Dorsolateral prefrontal cortex (tissue), 120 donors: ENCODE measurements at regions of chr4 and their contacts with region 1.

Region 1: DNA sequence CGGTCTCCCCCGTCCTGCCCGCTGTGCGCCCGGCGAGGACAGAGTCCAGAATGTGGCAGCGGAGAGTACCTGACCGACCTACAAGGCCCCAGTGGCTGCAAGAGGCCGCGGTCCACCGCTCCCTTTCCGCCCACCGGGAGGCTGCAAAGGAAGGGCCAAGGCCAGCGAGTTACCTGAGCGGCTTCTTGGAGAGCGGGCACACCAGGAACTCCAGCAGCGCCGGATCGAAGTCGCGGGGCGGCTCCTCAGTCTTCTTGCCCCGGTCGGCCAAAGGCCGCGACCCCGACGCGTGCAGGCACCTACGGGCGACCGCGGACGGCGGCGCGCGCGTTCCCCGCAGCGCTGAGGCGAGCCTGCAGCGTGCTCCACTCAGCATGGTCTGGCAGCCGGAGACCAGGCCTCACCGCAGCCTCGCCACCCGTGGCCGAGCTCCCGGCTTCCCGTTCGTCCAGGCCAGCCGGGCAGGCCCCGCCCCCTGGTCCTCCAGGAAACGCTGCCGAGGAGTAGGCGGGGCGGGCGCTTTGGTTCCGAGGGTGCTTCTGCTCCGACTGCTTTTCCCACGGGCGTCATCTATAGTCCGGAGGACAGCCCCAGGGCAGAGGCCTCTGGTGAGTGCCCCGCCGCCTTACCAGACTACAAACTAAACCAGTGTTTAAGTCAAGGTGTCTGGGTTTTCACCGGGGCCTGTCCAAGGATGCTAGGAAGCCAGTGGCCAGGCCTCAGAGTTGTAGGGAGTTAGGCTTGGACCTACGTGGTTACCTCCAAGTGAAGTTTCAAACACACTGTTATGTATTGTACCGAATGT is at the start of gene PYURF:
- DNase-seq: peak; percentile 88 to 96 (median 94)
- H3K4me3 ChIP-seq: peak within 1 kb of the TSS; percentile 56 to 98 (median 87)
- H3K27ac ChIP-seq: peak within 1 kb of the TSS; percentile 54 to 96 (median 91)
- H3K27me3 ChIP-seq: no peaks in the 10 kb centered on the region
- CTCF ChIP-seq: peak in 35 of 56 donors; percentile 10 to 60 (median 31)
- total RNA-seq, gene PYURF: 31.5 to 63.5 (median 49.8) TPM

Region 2: DNA sequence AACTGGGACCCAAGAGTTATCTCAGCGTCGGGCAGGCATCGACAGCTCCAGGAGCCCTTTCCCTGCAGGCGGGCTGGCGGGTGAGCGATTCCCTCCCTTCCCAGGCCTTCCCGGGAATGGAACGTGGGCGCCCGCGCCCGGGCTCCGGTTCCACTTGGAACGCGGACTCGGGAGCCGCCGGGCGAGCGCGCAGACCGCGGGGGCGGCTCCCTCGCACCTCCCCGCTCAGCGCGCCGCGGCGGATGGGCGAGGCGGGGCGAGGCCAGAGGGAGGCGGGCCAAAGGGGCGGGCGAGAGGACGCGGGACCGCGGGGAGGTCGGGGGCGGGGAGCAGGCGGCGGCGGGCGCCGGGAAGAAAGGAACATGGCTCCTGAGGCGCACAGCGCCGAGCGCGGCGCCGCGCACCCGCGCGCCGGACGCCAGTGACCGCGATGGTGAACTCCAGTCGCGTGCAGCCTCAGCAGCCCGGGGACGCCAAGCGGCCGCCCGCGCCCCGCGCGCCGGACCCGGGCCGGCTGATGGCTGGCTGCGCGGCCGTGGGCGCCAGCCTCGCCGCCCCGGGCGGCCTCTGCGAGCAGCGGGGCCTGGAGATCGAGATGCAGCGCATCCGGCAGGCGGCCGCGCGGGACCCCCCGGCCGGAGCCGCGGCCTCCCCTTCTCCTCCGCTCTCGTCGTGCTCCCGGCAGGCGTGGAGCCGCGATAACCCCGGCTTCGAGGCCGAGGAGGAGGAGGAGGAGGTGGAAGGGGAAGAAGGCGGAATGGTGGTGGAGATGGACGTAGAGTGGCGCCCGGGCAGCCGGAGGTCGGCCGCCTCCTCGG is 516.0 kb before region 1 on chr4 and contains the start of gene PKD2:
- intact Hi-C with region 1: loop called in 1 of 2 experiments (anchors 10 kb)
- DNase-seq: peak; percentile 76 to 93 (median 84)
- H3K4me3 ChIP-seq: peak within 1 kb of the TSS; percentile 64 to 94 (median 84)
- H3K27ac ChIP-seq: peak within 1 kb of the TSS; percentile 64 to 97 (median 91)
- H3K27me3 ChIP-seq: no peaks in the 10 kb centered on the region
- CTCF ChIP-seq: peak in 11 of 56 donors; percentile 9 to 30 (median 16)
- total RNA-seq, gene PKD2: 29.7 to 60.9 (median 40.7) TPM

Region 3: DNA sequence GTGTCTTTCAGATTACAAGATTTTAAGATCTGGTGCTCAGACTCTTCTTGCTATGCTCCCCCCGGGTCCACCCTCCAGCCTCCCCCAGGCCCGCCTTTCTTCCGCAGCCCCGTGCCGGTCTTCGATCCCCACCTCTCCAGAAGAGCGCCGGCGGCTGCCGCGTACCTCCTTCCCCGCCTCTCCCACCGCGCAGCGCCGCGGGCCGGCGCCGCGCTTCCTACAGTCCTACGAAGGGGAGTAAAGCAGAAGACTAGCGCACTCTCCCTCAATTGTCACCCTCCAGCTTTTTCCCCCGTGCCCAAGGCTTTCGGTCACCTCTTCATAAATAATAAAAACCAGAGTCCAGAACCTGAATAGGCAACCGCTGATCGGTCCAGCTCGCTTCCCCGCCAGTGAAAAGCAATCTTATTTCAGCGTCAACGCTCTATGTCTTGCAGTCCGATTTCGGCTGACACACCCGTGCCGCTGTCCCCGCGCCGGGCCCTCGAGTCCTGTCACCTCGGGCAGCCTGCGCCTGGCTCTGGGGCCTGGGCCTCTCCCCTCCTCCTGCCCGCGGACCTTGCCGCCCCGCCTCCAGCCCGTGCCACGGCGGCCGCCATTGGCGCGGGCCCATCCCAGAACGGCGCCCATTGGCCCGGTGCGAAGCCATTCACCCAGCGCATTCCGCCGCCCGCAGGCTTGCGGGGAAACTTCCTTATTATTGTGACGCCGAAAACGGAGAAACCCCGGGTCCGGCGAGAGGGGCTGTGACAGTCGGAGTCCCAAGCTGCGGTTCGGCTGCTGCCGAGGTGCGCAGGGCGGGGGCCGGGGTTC is 68.5 kb after region 1 on chr4 and contains the start of gene HERC3:
- intact Hi-C with region 1: loop called (anchors 2 to 5 kb)
- DNase-seq: peak; percentile 79 to 98 (median 90)
- H3K4me3 ChIP-seq: peak within 1 kb of the TSS; percentile 65 to 98 (median 93)
- H3K27ac ChIP-seq: peak within 1 kb of the TSS; percentile 81 to 99 (median 95)
- H3K27me3 ChIP-seq: no peaks in the 10 kb centered on the region
- CTCF ChIP-seq: peak in 30 of 56 donors; percentile 7 to 38 (median 22)
- total RNA-seq, gene HERC3: 37.3 to 96.2 (median 67.6) TPM

Region 4: DNA sequence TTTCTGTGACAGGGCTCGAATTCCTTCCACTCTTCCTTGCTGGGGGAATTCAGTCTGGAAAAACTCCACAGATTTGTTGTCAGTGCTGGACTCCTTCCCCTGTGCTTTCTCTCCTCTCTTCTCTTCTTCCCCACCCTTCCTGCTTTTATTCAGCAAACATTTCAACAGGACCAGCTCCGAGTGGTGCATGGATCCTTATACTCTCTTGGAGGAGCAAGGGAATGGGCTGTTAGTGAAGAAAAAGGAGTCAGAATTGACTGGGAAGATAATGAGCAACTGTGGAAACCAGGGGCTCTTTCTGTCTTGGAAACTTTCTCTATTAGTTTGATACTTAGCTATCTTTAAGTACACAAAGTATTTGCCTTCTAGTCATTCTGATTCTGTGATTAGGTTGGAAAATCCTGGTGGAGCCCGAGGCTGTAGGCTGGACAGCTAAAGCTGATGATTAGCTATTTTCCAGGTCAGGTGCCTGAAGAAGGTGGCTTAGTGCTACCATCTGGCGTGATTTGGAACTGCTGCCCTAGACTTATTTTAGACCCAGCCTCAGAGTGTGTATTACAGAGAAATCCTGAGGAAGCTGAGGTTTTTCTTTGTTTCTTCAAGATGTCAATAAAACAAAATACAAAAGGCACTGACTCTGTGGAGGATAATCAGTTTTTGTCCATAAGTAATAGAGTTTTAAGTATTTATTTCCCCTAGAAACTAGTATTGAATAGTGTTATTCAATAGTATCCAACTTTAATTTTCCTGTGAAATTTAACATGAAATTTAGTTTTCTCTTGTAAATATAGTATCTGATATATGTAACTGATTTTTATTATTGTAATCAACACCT is 135.7 kb after region 1 on chr4:
- intact Hi-C with region 1: loop called in 1 of 2 experiments (anchors 5 kb)
- DNase-seq: peak in 4 of 10 donors; percentile 38 to 69 (median 54)
- H3K4me3 ChIP-seq: no peak overlapping the region
- H3K27ac ChIP-seq: peak overlapping the region in 15 of 59 donors; percentile 0 to 69 (median 32)
- H3K27me3 ChIP-seq: no peaks in the 10 kb centered on the region
- CTCF ChIP-seq: peak; percentile 21 to 73 (median 61)

Region 5: DNA sequence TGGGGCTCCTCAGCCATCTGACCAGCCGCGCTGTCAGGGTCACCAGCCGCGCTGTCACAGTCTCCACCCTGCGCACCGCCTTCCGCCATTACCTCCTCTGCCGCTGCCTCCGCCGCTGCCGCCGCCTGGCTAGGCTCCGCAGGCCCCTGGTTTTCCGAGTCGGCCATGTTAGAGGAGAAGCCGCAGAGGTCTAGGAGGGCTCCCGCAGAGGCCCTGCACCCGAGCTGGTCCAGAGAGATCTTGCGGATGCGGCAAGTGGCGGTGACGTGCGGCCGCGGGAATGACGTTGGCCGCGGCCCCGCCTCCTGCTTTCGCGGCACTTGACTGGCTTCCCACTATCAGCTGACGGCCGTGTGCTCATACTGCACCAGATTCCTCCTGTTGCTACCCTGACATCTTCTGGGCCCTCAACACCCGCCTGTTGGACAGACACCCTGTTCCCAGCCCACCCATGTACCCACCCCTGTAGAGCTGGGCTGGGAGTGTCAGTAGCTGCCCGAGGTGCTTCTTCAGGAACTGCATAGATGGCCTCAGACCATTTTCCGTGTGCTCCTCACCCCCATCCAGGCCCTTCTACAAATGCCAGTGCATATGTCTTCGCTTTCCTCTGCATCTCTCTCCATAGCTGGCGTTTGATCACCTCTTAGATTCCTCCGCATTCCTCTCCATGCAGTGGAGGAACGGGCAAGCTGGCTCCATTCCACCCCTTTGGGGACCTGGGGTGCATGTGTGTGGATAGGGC is 174.2 kb after region 1 on chr4 and contains the start of gene NAP1L5:
- intact Hi-C with region 1: no loop called
- DNase-seq: peak; percentile 58 to 80 (median 74)
- H3K4me3 ChIP-seq: peak within 1 kb of the TSS; percentile 42 to 84 (median 67)
- H3K27ac ChIP-seq: peak within 1 kb of the TSS; percentile 28 to 94 (median 84)
- H3K27me3 ChIP-seq: no peaks in the 10 kb centered on the region
- CTCF ChIP-seq: no peak
- total RNA-seq, gene NAP1L5: 20.1 to 153 (median 95.5) TPM

Region 6: DNA sequence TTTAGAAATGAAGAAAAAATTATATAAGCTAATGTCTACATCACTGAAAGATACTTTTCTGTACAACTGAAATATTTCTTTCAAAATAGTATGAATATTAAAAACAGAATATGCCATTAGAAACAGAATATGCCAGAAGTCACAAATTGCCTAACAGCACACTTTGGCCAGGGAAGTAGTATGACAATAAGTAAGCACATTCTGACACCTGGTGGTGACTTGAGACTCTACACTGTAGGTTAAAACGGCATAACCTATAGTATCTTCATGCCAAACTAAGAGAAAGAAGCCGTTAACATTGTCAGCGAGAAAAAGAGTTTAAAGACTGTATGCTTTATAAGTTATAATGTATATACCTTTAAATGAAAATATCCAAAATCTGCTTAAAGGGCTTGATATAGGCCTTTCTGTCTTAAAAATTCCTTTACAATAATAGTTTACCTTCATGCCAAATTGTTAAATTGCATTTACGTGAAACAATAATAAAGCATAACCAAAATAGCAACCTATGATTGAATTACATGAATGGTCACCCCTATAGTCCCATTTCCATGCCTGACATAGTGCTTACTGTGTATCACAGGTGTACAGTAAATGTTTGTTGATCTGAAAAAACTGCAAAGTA is 500.6 kb after region 1 on chr4:
- intact Hi-C with region 1: loop called in 1 of 2 experiments (anchors 2 kb)
- DNase-seq: peak in 3 of 10 donors; percentile 25 to 63 (median 53)
- H3K4me3 ChIP-seq: peak overlapping the region in 1 of 59 donors; percentile 5
- H3K27ac ChIP-seq: no peak overlapping the region
- H3K27me3 ChIP-seq: no peaks in the 10 kb centered on the region
- CTCF ChIP-seq: peak; percentile 78 to 99 (median 92)

Region 7: DNA sequence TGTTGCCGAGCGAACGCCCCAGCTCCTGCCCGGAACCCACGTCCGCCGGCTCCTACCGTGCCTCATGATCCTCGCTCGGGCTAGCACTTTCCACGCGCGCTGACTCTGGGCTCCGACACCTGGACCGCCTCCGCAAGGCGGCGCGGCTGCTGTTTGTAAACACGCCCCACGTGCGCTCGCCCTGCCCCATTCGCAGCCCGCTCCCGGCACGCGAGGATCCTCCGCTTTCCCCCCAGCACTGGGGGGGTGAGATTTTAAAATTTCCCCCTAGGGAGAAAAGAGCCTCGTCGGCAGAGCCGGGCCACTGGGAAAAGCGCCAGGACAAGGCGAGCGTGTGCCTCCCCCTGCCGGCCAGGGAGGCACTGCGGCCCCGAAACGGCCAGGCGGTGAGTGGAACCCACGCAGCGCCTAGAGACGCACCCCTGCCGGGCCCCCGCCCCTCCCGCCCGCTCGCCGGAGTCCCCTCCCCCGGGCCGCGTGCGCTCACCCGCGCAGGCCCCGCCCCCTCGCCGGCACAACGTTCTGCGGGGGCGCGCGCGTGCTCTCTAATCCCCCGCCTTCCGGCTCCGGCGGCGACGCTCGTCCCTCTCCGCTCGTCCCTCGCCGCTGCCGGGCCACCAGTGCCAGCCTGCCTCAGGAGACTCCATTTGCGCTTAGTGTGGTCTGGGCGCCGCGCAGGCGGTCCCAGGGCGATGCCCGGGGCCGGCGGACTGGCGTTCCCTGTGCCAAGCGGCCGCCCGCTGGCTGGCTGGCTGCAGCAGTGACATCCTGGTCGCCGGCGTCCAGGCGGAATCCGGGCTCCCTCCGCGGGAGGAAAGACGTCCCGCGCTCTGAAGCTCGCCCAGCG is 587.7 kb after region 1 on chr4 and contains the start of gene TIGD2:
- intact Hi-C with region 1: loop called in 1 of 2 experiments (anchors 5 kb)
- DNase-seq: peak; percentile 62 to 89 (median 81)
- H3K4me3 ChIP-seq: peak within 1 kb of the TSS; percentile 62 to 99 (median 85)
- H3K27ac ChIP-seq: peak within 1 kb of the TSS; percentile 47 to 95 (median 85)
- H3K27me3 ChIP-seq: no peaks in the 10 kb centered on the region
- CTCF ChIP-seq: peak; percentile 54 to 96 (median 82)
- total RNA-seq, gene TIGD2: 2.4 to 7.4 (median 4.9) TPM